ENCODE measurements at regions of chr11 and their contacts with region 1.

Region 1: GRCh38 chr11:12599408-12600143 is 74.6 kb upstream of the TEAD1 start:
- DNase-seq: peak; percentile 18
- H3K4me3 ChIP-seq: no peak overlapping the region
- H3K27ac ChIP-seq: no peak overlapping the region
- H3K4me1 ChIP-seq: peaks cover 7% of the 10 kb centered on the region
- H3K27me3 ChIP-seq: no peaks in the 10 kb centered on the region
- CTCF ChIP-seq: peak; percentile 76 to 77
- POLR2A ChIP-seq: no peak

Region 2: GRCh38 chr11:12411806-12412727 is 187.5 kb before region 1 on chr11:
- CTCF ChIA-PET with region 1: interaction called, 3 read pairs
- POLR2A ChIA-PET with region 1: no interaction called
- dilution Hi-C with region 1: no loop called
- intact Hi-C with region 1: loop called (anchors 5 kb)
- DNase-seq: peak; percentile 82
- H3K4me3 ChIP-seq: no peak overlapping the region
- H3K27ac ChIP-seq: peak overlapping the region; percentile 85
- H3K4me1 ChIP-seq: peaks cover 17% of the 10 kb centered on the region
- H3K27me3 ChIP-seq: no peaks in the 10 kb centered on the region
- CTCF ChIP-seq: peak; percentile 88 to 90
- POLR2A ChIP-seq: peak; percentile 19

Region 3: DNA sequence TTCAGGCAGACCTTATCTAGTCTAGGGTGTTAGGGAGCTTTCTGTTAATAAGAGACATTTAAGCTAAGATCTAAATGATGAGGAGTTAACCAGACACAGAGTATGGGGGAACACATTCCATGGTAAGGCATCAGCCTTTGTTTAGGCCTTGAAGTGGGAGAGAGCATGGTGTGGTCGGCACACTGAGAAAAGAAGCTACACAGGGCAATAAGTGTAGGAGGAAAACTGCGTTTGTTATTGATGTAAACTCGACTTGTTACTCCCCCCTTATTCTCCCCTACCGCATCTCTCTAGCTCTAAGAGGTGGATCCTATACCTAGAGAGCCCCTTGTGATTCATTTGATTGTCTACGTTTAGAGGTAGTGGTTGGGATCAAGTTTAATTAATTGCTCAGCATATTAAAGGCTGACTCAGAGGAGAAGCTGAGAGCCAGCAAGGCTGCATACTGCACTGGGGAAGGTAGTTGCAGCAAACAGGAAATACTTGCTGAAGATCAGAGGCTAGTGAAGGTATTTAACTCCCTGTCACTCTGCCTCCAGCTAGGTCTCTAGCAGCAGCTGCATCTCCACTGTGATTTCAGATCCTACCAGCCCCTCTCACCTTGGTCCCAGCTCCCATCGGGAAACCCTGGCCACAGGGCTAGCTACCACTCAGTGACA is 12.1 kb before region 1 on chr11:
- CTCF ChIA-PET with region 1: interaction called, 16 read pairs
- POLR2A ChIA-PET with region 1: no interaction called
- dilution Hi-C with region 1: no loop called
- intact Hi-C with region 1: no loop called
- DNase-seq: peak; percentile 12
- H3K4me3 ChIP-seq: no peak overlapping the region
- H3K27ac ChIP-seq: no peak overlapping the region
- H3K4me1 ChIP-seq: no peaks in the 10 kb centered on the region
- H3K27me3 ChIP-seq: peaks cover 20% of the 10 kb centered on the region in 2 experiments
- CTCF ChIP-seq: no peak
- POLR2A ChIP-seq: no peak

Region 4: DNA sequence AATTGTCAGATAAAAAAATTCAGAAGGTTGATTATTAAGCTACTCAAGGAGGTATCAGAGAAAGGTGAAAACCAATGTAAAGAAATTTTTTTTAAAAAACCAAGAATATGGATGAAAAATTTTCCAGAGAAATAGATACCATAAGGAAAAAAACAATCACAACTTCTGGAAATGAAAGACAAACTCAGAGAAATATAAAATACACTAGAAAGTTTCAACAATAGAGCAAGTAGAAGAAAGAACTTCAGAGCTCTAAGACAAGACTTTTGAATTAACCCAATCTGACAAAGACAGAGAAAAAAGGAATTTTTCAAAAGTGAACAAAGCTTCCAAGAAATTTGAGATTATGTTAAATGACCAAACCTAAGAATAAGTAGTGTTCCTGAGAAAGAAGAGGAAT is 11.8 kb after region 1 on chr11:
- CTCF ChIA-PET with region 1: interaction called, 12 read pairs
- POLR2A ChIA-PET with region 1: no interaction called
- dilution Hi-C with region 1: no loop called
- intact Hi-C with region 1: no loop called
- DNase-seq: no peak
- H3K4me3 ChIP-seq: no peak overlapping the region
- H3K27ac ChIP-seq: no peak overlapping the region
- H3K4me1 ChIP-seq: no peaks in the 10 kb centered on the region
- H3K27me3 ChIP-seq: peaks cover 11 to 23% of the 10 kb centered on the region in 2 experiments
- CTCF ChIP-seq: no peak
- POLR2A ChIP-seq: no peak

Region 5: GRCh38 chr11:12761029-12761428 is 161.5 kb after region 1 on chr11:
- CTCF ChIA-PET with region 1: interaction called, 9 read pairs
- POLR2A ChIA-PET with region 1: no interaction called
- dilution Hi-C with region 1: no loop called
- intact Hi-C with region 1: loop called (anchors 1 kb)
- DNase-seq: peak; percentile 65
- H3K4me3 ChIP-seq: no peak overlapping the region
- H3K27ac ChIP-seq: peak overlapping the region; percentile 10
- H3K4me1 ChIP-seq: peaks cover 11% of the 10 kb centered on the region
- H3K27me3 ChIP-seq: no peaks in the 10 kb centered on the region
- CTCF ChIP-seq: peak; percentile 40 to 45
- POLR2A ChIP-seq: no peak

Region 6: GRCh38 chr11:12787847-12788246 is 188.3 kb after region 1 on chr11:
- CTCF ChIA-PET with region 1: no interaction called
- POLR2A ChIA-PET with region 1: no interaction called
- dilution Hi-C with region 1: no loop called
- intact Hi-C with region 1: no loop called
- DNase-seq: peak; percentile 83
- H3K4me3 ChIP-seq: no peak overlapping the region
- H3K27ac ChIP-seq: peak overlapping the region; percentile 17
- H3K4me1 ChIP-seq: peaks cover 14% of the 10 kb centered on the region
- H3K27me3 ChIP-seq: no peaks in the 10 kb centered on the region
- CTCF ChIP-seq: no peak
- POLR2A ChIP-seq: no peak

Region 7: GRCh38 chr11:12813371-12814225 is 214.0 kb after region 1 on chr11:
- CTCF ChIA-PET with region 1: interaction called, 4 read pairs
- POLR2A ChIA-PET with region 1: no interaction called
- dilution Hi-C with region 1: no loop called
- intact Hi-C with region 1: loop called (anchors 1 kb)
- DNase-seq: peak; percentile 17
- H3K4me3 ChIP-seq: no peak overlapping the region
- H3K27ac ChIP-seq: no peak overlapping the region
- H3K4me1 ChIP-seq: peaks cover 15% of the 10 kb centered on the region
- H3K27me3 ChIP-seq: no peaks in the 10 kb centered on the region
- CTCF ChIP-seq: no peak
- POLR2A ChIP-seq: no peak

Measured in endothelial cell of umbilical vein (primary cell).